Dorsolateral prefrontal cortex (tissue), 120 donors: ENCODE measurements at regions of chr17 and their contacts with region 1.

Region 1: GRCh38 chr17:43994272-43995149 is 9.9 kb upstream of the NAGS start:
- DNase-seq: peak; percentile 35 to 85 (median 72)
- H3K4me3 ChIP-seq: peak overlapping the region; percentile 26 to 71 (median 51)
- H3K27ac ChIP-seq: no peak overlapping the region
- H3K27me3 ChIP-seq: peaks cover 0 to 8% (median 0%) of the 10 kb centered on the region in 45 donors
- CTCF ChIP-seq: peak; percentile 74 to 96 (median 92)

Region 2: GRCh38 chr17:43878260-43879175 is 116.0 kb before region 1 on chr17:
- intact Hi-C with region 1: loop called (anchors 2 to 10 kb)
- DNase-seq: peak; percentile 55 to 84 (median 72)
- H3K4me3 ChIP-seq: peak overlapping the region in 1 of 59 donors; percentile 19
- H3K27ac ChIP-seq: peak overlapping the region in 36 of 59 donors; percentile 3 to 72 (median 50)
- H3K27me3 ChIP-seq: no peaks in the 10 kb centered on the region
- CTCF ChIP-seq: peak; percentile 64 to 99 (median 94)

Region 3: GRCh38 chr17:44110823-44111633 is 116.5 kb after region 1 on chr17:
- intact Hi-C with region 1: no loop called
- DNase-seq: peak; percentile 85 to 99 (median 97)
- H3K4me3 ChIP-seq: peak overlapping the region; percentile 23 to 72 (median 53)
- H3K27ac ChIP-seq: peak overlapping the region; percentile 72 to 98 (median 92)
- H3K27me3 ChIP-seq: no peaks in the 10 kb centered on the region
- CTCF ChIP-seq: peak in 28 of 56 donors; percentile 8 to 58 (median 34)

Region 4: GRCh38 chr17:44146375-44147346 is 152.2 kb after region 1 on chr17:
- intact Hi-C with region 1: no loop called
- DNase-seq: no peak
- H3K4me3 ChIP-seq: no peak overlapping the region
- H3K27ac ChIP-seq: no peak overlapping the region
- H3K27me3 ChIP-seq: no peaks in the 10 kb centered on the region
- CTCF ChIP-seq: no peak